ENCODE measurements at regions of chr2 and their contacts with region 1.

Region 1: DNA sequence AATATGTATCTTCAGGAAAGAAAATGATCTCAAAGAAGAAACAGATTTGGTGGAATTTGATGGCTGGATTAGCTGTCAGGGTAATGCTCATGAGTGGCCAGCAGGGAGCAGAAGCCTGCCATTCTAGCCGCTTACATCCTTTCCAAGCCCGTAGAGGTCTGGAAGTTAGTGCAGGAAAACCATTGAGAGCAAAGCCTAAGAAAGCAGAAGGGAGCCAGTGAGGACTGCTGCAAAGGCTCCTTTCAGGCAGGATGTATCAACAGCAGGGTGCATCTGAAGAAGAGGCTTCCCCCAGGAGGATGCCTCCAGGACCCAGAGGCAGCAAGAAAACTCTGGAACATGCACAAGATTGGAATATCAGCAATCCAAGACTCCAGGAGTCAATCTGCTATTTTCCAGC is 22.9 kb upstream of the LBH start:
- DNase-seq: peak in 4 of 5 donors; percentile 63 to 79 (median 74)
- ATAC-seq: peak; percentile 51 to 96 (median 94)
- H3K4me3 ChIP-seq: no peak overlapping the region
- H3K27ac ChIP-seq: peak overlapping the region in 2 of 12 donors; percentile 16 to 35
- H3K4me1 ChIP-seq: peaks cover 0 to 28% (median 4%) of the 10 kb centered on the region in 12 donors
- H3K27me3 ChIP-seq: no peaks in the 10 kb centered on the region
- CTCF ChIP-seq: peak; percentile 82 to 96 (median 90)
- POLR2A ChIP-seq: no peak

Region 2: DNA sequence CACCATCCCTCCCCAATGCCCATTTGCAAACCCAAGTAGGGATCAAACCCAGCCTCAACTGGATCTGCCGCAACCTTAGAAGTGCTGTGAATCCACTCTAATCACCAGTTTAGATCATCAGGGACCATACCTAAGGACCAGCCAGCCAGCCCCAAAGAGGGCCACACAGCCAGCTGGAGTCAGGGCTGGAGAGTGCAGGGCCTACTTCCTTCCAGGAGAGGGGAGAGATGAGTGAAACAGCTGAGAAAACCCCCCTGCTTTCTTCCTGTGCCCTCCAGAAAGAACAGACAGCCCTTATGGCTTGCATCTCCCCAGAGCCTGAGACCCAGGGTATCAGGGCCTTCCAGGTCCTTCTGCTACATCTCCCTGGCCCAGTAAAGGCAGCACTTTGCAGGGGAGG is 35.8 kb before region 1 on chr2:
- intact Hi-C with region 1: loop called in 8 of 10 experiments (anchors 5 kb)
- DNase-seq: no peak
- ATAC-seq: no peak
- H3K4me3 ChIP-seq: no peak overlapping the region
- H3K27ac ChIP-seq: no peak overlapping the region
- H3K4me1 ChIP-seq: no peaks in the 10 kb centered on the region
- H3K27me3 ChIP-seq: no peaks in the 10 kb centered on the region
- CTCF ChIP-seq: no peak
- POLR2A ChIP-seq: no peak

Region 3: GRCh38 chr2:30336978-30337841 is 128.8 kb after region 1 on chr2:
- intact Hi-C with region 1: loop called in 1 of 10 experiments (anchors 5 kb)
- DNase-seq: no peak
- ATAC-seq: no peak
- H3K4me3 ChIP-seq: no peak overlapping the region
- H3K27ac ChIP-seq: peak overlapping the region in 4 of 12 donors; percentile 26 to 77 (median 60)
- H3K4me1 ChIP-seq: peaks cover 0 to 46% (median 25%) of the 10 kb centered on the region in 12 donors
- H3K27me3 ChIP-seq: no peaks in the 10 kb centered on the region
- CTCF ChIP-seq: no peak
- POLR2A ChIP-seq: no peak

Measured in heart left ventricle (tissue), 16 donors.